ENCODE measurements at regions of chrX and their contacts with region 1.

Region 1: DNA sequence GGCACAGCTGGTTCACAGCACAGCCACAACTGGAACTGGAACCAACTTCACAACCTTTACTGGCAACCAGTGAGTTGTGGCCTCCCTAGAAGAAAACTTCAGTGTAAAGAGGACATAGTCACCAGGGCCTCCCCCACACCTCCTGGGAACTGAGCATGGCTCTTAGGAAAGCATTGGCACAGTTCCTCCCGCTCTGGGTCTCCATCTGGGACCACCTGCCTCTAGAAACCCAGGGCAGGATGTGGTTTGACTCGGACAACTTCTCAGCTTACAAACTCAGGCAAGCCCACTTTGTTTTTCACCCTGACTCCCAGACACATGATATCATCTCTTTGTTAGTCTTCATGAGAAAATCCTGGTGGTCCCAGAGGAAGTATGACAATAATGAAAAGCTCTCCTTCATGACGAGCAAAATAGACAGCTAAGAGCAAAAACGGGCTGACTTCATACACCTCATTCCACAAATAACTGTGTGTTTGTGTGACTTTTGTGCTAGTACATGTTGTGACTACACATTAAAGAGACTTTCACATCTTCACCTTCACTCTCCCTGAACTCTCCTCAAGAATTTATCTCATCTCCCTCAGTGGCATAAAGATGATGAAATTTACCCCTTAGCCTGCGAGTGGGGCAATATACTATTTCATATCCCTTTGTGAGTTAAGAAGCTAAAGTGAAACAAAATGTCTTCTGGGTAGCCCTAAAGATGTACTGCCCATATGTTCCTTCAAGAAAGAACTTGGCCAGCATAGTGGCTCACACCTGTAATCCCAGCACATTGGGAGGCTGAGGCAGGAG is 75.4 kb downstream of the SH3KBP1 start:
- DNase-seq: peak in 2 of 3 donors; percentile 44
- H3K4me3 ChIP-seq: no peak overlapping the region
- H3K4me3 Mint-ChIP-seq: peak overlapping the region in 1 of 2 donors; percentile 31
- H3K27ac ChIP-seq: peak overlapping the region; percentile 55 to 66
- H3K27ac Mint-ChIP-seq: peak overlapping the region; percentile 69 to 93 (median 86)
- H3K4me1 ChIP-seq: peaks cover 53 to 54% of the 10 kb centered on the region in 2 donors
- H3K4me1 Mint-ChIP-seq: peaks cover 56% of the 10 kb centered on the region
- H3K27me3 ChIP-seq: no peaks in the 10 kb centered on the region
- H3K27me3 Mint-ChIP-seq: peaks cover 0 to 2% (median 0%) of the 10 kb centered on the region in 3 donors
- CTCF ChIP-seq: no peak

Region 2: GRCh38 chrX:19846995-19847790 is 35.2 kb after region 1 on chrX:
- intact Hi-C with region 1: loop called in 1 of 2 experiments (anchors 5 kb)
- DNase-seq: peak; percentile 71 to 84 (median 78)
- H3K4me3 ChIP-seq: peak overlapping the region in 1 of 3 experiments; percentile 0
- H3K4me3 Mint-ChIP-seq: peak overlapping the region; percentile 34 to 71
- H3K27ac ChIP-seq: peak overlapping the region; percentile 42 to 71
- H3K27ac Mint-ChIP-seq: peak overlapping the region; percentile 83 to 96 (median 87)
- H3K4me1 ChIP-seq: peaks cover 49 to 51% of the 10 kb centered on the region in 2 donors
- H3K4me1 Mint-ChIP-seq: peaks cover 56% of the 10 kb centered on the region
- H3K27me3 ChIP-seq: no peaks in the 10 kb centered on the region
- H3K27me3 Mint-ChIP-seq: peaks cover 0 to 7% (median 0%) of the 10 kb centered on the region in 3 donors
- CTCF ChIP-seq: no peak

Measured in CD14-positive monocyte (primary cell).